A549 (cell line): ENCODE measurements at regions of chr12 and their contacts with region 1.

Region 1: GRCh38 chr12:49515266-49515665 is 23.6 kb upstream of the KCNH3 start:
- DNase-seq: peak; percentile 47 to 64
- ATAC-seq: peak in 1 of 2 experiments; percentile 68; a peak in 3 of 6 replicates
- H3K4me3 ChIP-seq: no peak overlapping the region
- H3K27ac ChIP-seq: peak overlapping the region; percentile 70 to 87
- H3K4me1 ChIP-seq: peaks cover 81% of the 10 kb centered on the region
- CTCF ChIP-seq: no peak
- EP300 ChIP-seq: peak; percentile 23 to 27; a peak in 1 of 5 replicates
- POLR2A ChIP-seq: no peak
- RAD21 ChIP-seq: 0 out of 5 replicates have a peak, but pooled peaks of 1 of the 2 experiments have one; percentile 30

Region 2: GRCh38 chr12:49331380-49332222 is 183.7 kb before region 1 on chr12:
- CTCF ChIA-PET with region 1: interaction called, 64 read pairs
- POLR2A ChIA-PET with region 1: no interaction called
- DNase-seq: peak; percentile 83 to 90
- ATAC-seq: peak; percentile 88 to 93
- H3K4me3 ChIP-seq: no peak overlapping the region
- H3K27ac ChIP-seq: peak overlapping the region in 1 of 2 experiments; percentile 28; a peak in 1 of 6 replicates
- H3K4me1 ChIP-seq: peaks cover 6% of the 10 kb centered on the region; the same call in 2 of the 3 replicates
- CTCF ChIP-seq: peak; percentile 82
- EP300 ChIP-seq: no peak
- POLR2A ChIP-seq: no peak
- RAD21 ChIP-seq: peak; percentile 85 to 86

Region 3: GRCh38 chr12:49482095-49483051 is 32.9 kb before region 1 on chr12:
- CTCF ChIA-PET with region 1: interaction called, 15 read pairs
- POLR2A ChIA-PET with region 1: no interaction called
- DNase-seq: no peak
- ATAC-seq: peak; percentile 35 to 48; a peak in 3 of 6 replicates
- H3K4me3 ChIP-seq: no peak overlapping the region
- H3K27ac ChIP-seq: peak overlapping the region; percentile 6 to 48; a peak in 4 of 6 replicates
- H3K4me1 ChIP-seq: peaks cover 28% of the 10 kb centered on the region
- CTCF ChIP-seq: no peak
- EP300 ChIP-seq: no peak
- POLR2A ChIP-seq: no peak
- RAD21 ChIP-seq: no peak

Region 4: DNA sequence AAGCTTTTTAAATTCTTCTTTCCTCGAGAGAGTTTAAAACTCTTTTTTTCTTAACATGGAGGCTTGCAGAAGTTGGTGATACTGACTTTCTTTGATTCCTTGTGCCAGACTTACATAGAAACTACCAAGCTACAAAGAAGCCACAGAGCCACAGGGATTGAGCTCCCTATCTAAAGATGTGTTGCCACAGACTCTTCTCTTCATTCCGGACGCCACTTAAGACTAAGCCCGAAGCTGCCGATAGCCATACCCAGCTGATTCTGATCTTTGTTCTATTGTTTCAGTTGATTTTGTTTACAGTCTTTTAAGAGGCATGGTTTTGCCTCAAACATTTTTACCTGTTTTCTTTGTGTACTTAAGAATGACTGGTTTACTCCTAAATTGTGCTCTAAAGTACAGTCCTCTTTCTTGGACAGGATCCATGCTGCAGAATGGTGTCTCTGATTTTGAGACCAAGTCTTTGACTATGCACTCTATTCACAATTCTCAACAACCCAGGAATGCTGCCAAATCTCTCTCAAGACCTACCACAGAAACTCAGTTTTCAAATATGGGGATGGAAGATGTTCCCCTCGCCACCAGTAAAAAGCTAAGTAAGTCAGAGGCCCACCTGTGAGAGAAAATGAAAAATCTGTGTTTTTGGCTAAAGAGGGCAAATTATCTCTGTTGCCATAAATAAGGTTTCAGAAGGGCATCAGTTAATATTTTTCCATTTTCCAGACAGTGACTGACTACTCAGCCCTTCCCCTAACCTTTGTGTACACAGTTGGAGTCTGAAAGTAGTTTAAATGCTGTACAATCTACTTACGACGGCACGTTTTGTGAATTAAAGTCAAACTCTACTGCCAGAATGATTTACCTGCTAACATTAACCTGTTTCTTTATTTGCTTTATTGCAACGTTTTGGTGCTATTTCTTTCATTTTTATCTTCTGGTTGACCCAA is 18.6 kb before region 1 on chr12:
- CTCF ChIA-PET with region 1: interaction called, 19 read pairs
- POLR2A ChIA-PET with region 1: no interaction called
- DNase-seq: peak in 1 of 2 experiments; percentile 57
- ATAC-seq: peak; percentile 78 to 82; a peak in 5 of 6 replicates
- H3K4me3 ChIP-seq: peak overlapping the region; percentile 17; the same call in 2 of the 3 replicates
- H3K27ac ChIP-seq: peak overlapping the region; percentile 74 to 81
- H3K4me1 ChIP-seq: peaks cover 39% of the 10 kb centered on the region
- CTCF ChIP-seq: no peak
- EP300 ChIP-seq: 0 out of 5 replicates have a peak, but pooled peaks have one; percentile 0 to 30
- POLR2A ChIP-seq: no peak
- RAD21 ChIP-seq: no peak

Region 5: GRCh38 chr12:49527361-49528130 is 12.3 kb after region 1 on chr12:
- CTCF ChIA-PET with region 1: interaction called, 22 read pairs
- POLR2A ChIA-PET with region 1: no interaction called
- DNase-seq: no peak
- ATAC-seq: no peak
- H3K4me3 ChIP-seq: no peak overlapping the region
- H3K27ac ChIP-seq: no peak overlapping the region
- H3K4me1 ChIP-seq: no peaks in the 10 kb centered on the region
- CTCF ChIP-seq: no peak
- EP300 ChIP-seq: no peak
- POLR2A ChIP-seq: peak; percentile 21; the same call in 1 of the 2 replicates
- RAD21 ChIP-seq: no peak

Region 6: DNA sequence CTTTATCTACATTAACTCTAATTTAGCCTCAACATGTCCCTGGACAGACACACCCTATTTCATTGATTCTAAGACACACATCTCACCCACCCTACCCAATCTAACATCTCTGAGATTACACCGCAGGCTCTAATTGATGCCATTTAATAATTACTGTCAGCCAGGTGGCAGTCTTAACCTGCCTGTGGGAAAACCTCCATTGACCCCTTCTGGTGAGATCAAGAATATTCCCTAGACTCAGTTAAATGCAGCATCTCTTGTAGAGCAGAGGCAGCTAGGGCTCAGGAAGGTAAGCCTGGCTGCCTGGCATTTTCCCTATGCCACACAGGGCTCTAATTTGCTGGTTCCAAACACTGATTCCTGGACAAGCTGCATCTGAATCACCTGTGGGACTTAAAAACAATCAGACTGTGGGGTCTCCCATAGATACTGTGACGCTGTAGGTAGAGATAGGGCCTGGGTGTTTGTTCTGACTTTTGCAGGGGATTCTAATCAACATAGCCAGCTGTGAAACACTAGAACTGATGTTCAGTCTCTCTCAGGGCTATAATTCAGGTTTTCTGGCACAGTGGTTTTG is 38.3 kb after region 1 on chr12:
- CTCF ChIA-PET with region 1: interaction called, 19 read pairs
- POLR2A ChIA-PET with region 1: no interaction called
- DNase-seq: peak; percentile 68 to 71
- ATAC-seq: peak; percentile 58 to 75
- H3K4me3 ChIP-seq: no peak overlapping the region
- H3K27ac ChIP-seq: no peak overlapping the region
- H3K4me1 ChIP-seq: no peaks in the 10 kb centered on the region
- CTCF ChIP-seq: peak; percentile 72
- EP300 ChIP-seq: no peak
- POLR2A ChIP-seq: no peak
- RAD21 ChIP-seq: peak; percentile 72 to 87